SK-N-SH (cell line): ENCODE measurements at regions of chr13 and their contacts with region 1.

Region 1: GRCh38 chr13:99436686-99437416 is 64.4 kb upstream of the TM9SF2 start:
- DNase-seq: peak; percentile 86
- H3K4me3 ChIP-seq: peak overlapping the region; percentile 2 to 55; a peak in 3 of 4 replicates
- H3K27ac ChIP-seq: no peak overlapping the region
- H3K4me1 ChIP-seq: peaks cover 3 to 10% of the 10 kb centered on the region in 2 experiments; a peak in 2 of 4 replicates
- H3K27me3 ChIP-seq: peaks cover 7% of the 10 kb centered on the region; the same call in 1 of the 2 replicates
- CTCF ChIP-seq: peak; percentile 100
- EP300 ChIP-seq: no peak
- RAD21 ChIP-seq: peak; percentile 83

Region 2: GRCh38 chr13:99185606-99186005 is 251.2 kb before region 1 on chr13:
- CTCF ChIA-PET with region 1: interaction called, 10 read pairs
- POLR2A ChIA-PET with region 1: no interaction called
- DNase-seq: no peak
- H3K4me3 ChIP-seq: no peak overlapping the region
- H3K27ac ChIP-seq: no peak overlapping the region
- H3K4me1 ChIP-seq: no peaks in the 10 kb centered on the region
- H3K27me3 ChIP-seq: no peaks in the 10 kb centered on the region
- CTCF ChIP-seq: no peak
- EP300 ChIP-seq: no peak
- RAD21 ChIP-seq: no peak

Region 3: GRCh38 chr13:99264051-99264450 is 172.8 kb before region 1 on chr13:
- CTCF ChIA-PET with region 1: interaction called, 249 read pairs
- POLR2A ChIA-PET with region 1: no interaction called
- DNase-seq: no peak
- H3K4me3 ChIP-seq: no peak overlapping the region
- H3K27ac ChIP-seq: no peak overlapping the region
- H3K4me1 ChIP-seq: no peaks in the 10 kb centered on the region
- H3K27me3 ChIP-seq: no peaks in the 10 kb centered on the region
- CTCF ChIP-seq: no peak
- EP300 ChIP-seq: no peak
- RAD21 ChIP-seq: no peak

Region 4: DNA sequence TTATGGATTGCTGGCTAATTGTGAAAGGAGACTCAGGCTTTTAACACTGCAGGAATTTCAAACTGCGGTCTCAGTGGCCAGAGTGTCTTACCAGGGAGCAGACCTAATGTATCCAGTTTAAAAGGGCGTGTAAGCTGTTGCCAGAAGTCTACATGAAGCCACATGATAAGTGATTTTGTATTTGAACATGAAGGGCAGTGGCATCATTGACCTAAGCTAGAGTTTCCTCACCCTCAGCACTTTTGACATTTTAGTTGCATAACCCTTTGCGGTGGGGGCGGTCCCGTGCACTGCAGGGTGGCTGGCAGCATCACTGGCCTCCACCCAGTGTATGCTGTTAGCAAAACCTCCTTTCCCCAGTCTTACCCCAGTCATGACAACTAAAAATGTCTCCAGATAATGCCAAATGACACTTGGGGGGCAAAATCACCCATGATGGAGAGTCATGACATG is 155.0 kb before region 1 on chr13:
- CTCF ChIA-PET with region 1: interaction called, 38 read pairs
- POLR2A ChIA-PET with region 1: no interaction called
- DNase-seq: no peak
- H3K4me3 ChIP-seq: no peak overlapping the region
- H3K27ac ChIP-seq: peak overlapping the region in 1 of 2 experiments; percentile 60; a peak in 1 of 4 replicates
- H3K4me1 ChIP-seq: peaks cover 6 to 7% of the 10 kb centered on the region in 2 experiments; a peak in 3 of 4 replicates
- H3K27me3 ChIP-seq: no peaks in the 10 kb centered on the region
- CTCF ChIP-seq: no peak
- EP300 ChIP-seq: no peak
- RAD21 ChIP-seq: no peak

Region 5: GRCh38 chr13:99417201-99418102 is 19.4 kb before region 1 on chr13:
- CTCF ChIA-PET with region 1: interaction called, 33 read pairs
- POLR2A ChIA-PET with region 1: no interaction called
- DNase-seq: no peak
- H3K4me3 ChIP-seq: no peak overlapping the region
- H3K27ac ChIP-seq: no peak overlapping the region
- H3K4me1 ChIP-seq: no peaks in the 10 kb centered on the region; a peak in 1 of 4 replicates
- H3K27me3 ChIP-seq: no peaks in the 10 kb centered on the region; the same call in 1 of the 2 replicates
- CTCF ChIP-seq: no peak
- EP300 ChIP-seq: no peak
- RAD21 ChIP-seq: no peak

Region 6: DNA sequence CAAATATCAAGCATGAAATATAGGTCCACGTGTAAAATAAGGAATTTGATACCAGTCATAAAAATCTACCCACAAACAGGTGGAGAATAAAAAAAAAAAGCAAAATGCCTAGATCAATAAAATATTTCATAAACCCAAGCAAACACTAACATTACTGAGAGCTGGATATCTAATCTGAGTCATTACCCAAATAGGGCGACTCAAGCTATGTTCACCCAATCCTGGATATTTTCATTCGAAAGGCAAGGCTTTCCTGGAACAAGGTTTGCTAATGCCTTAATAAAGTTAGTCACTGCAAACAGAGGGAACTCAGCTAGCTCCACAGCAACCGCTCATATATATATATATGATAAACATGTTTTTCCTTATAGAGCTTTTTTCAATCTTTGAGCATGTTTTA is 30.9 kb after region 1 on chr13:
- CTCF ChIA-PET with region 1: interaction called, 13 read pairs
- POLR2A ChIA-PET with region 1: no interaction called
- DNase-seq: no peak
- H3K4me3 ChIP-seq: no peak overlapping the region
- H3K27ac ChIP-seq: no peak overlapping the region; a peak in 1 of 4 replicates
- H3K4me1 ChIP-seq: no peaks in the 10 kb centered on the region; a peak in 1 of 4 replicates
- H3K27me3 ChIP-seq: no peaks in the 10 kb centered on the region
- CTCF ChIP-seq: no peak
- EP300 ChIP-seq: no peak
- RAD21 ChIP-seq: no peak